ENCODE measurements at regions of chr15 and their contacts with region 1.

Region 1: DNA sequence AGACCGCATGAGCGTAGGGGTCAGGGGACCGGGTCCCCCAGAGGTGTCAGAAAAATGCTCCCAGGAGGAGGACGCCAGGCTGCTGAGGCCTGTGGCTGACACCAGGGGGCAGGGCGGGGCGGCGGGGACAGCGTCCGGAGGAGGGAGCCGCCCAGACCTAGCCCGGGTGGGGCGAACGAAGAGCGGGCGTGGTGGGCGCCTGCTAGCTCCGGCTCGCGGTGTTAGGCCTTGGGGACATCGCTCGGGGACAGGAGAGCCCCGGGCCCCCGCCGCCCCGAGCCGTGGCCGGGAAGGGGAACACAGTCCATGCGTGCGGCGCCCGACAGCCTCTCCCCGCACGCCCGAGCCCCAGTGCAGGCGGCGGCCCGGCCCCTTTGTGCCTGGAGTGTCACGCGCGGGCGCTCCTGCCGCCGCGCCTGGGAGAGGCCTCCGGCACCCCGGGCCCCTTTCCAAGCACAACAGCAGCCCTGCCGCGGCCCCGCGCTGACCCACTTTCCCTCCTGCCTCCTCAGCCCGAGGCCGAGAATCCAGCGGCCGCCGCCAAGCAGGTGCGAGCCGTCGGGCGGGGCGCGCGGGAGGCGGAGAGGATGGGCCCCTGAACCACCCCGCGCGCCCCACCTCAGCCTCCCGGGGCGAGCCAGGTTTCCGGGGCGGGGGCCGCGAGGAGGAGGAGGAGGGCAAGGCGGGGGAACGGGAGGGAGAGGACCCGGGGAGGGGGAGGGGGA is 111.0 kb upstream of the KLF13 start:
- ATAC-seq: peak; percentile 55 to 81 (median 76)
- H3K4me3 ChIP-seq: peak overlapping the region; percentile 26 to 45 (median 33)
- H3K27ac ChIP-seq: peak overlapping the region; percentile 56 to 88
- H3K4me1 ChIP-seq: peaks cover 8 to 11% of the 10 kb centered on the region in 2 donors

Region 2: GRCh38 chr15:31098953-31099740 is 116.5 kb before region 1 on chr15:
- in situ Hi-C with region 1: no loop called
- ATAC-seq: peak in 1 of 8 experiments; percentile 44
- H3K4me3 ChIP-seq: no peak overlapping the region
- H3K27ac ChIP-seq: no peak overlapping the region
- H3K4me1 ChIP-seq: peaks cover 8 to 15% of the 10 kb centered on the region in 2 donors

Region 3: GRCh38 chr15:31302778-31303725 is 87.4 kb after region 1 on chr15:
- in situ Hi-C with region 1: loop called in 1 of 9 experiments (anchors 25 kb)
- ATAC-seq: peak in 3 of 8 experiments; percentile 30 to 50 (median 42)
- H3K4me3 ChIP-seq: no peak overlapping the region
- H3K27ac ChIP-seq: no peak overlapping the region
- H3K4me1 ChIP-seq: peaks cover 59 to 71% of the 10 kb centered on the region in 2 donors

Measured in motor neuron (in vitro differentiated cells).